Common myeloid progenitor, CD34-positive (primary cell): ENCODE measurements at regions of chr5 and their contacts with region 1.

Region 1: GRCh38 chr5:139787568-139788293 is 7.9 kb upstream of the PSD2 start:
- DNase-seq: peak; percentile 69 to 78 (median 71)
- H3K4me3 ChIP-seq: peak overlapping the region; percentile 49 to 87 (median 73)
- H3K27ac ChIP-seq: no peak overlapping the region
- H3K4me1 ChIP-seq: peaks cover 0 to 9% (median 8%) of the 10 kb centered on the region in 4 experiments
- H3K27me3 ChIP-seq: peaks cover 0 to 18% (median 4%) of the 10 kb centered on the region in 5 experiments

Region 2: GRCh38 chr5:139756971-139757370 is 30.8 kb before region 1 on chr5:
- CTCF ChIA-PET with region 1: no interaction called
- POLR2A ChIA-PET with region 1: no interaction called
- DNase-seq: no peak
- H3K4me3 ChIP-seq: no peak overlapping the region
- H3K27ac ChIP-seq: no peak overlapping the region
- H3K4me1 ChIP-seq: peaks cover 0 to 38% (median 26%) of the 10 kb centered on the region in 4 experiments
- H3K27me3 ChIP-seq: peaks cover 0 to 56% (median 26%) of the 10 kb centered on the region in 5 experiments

Region 3: GRCh38 chr5:139774980-139775661 is 12.6 kb before region 1 on chr5:
- CTCF ChIA-PET with region 1: interaction called, 42 read pairs
- POLR2A ChIA-PET with region 1: no interaction called
- DNase-seq: peak; percentile 73 to 81 (median 80)
- H3K4me3 ChIP-seq: peak overlapping the region in 2 of 7 experiments; percentile 19 to 47
- H3K27ac ChIP-seq: no peak overlapping the region
- H3K4me1 ChIP-seq: peaks cover 0 to 10% (median 9%) of the 10 kb centered on the region in 4 experiments
- H3K27me3 ChIP-seq: peaks cover 0 to 5% (median 0%) of the 10 kb centered on the region in 5 experiments

Region 4: GRCh38 chr5:140342287-140342686 is 554.6 kb after region 1 on chr5:
- CTCF ChIA-PET with region 1: no interaction called
- POLR2A ChIA-PET with region 1: no interaction called
- DNase-seq: peak; percentile 54 to 72 (median 66)
- H3K4me3 ChIP-seq: peak overlapping the region in 2 of 7 experiments; percentile 20 to 42
- H3K27ac ChIP-seq: no peak overlapping the region
- H3K4me1 ChIP-seq: peaks cover 31 to 69% (median 34%) of the 10 kb centered on the region in 4 experiments
- H3K27me3 ChIP-seq: peaks cover 0 to 13% (median 6%) of the 10 kb centered on the region in 5 experiments